MCF 10A (cell line): ENCODE measurements at regions of chr11 and their contacts with region 1.

Region 1: GRCh38 chr11:58675334-58676155 is 53.1 kb downstream of the CNTF start:
- DNase-seq: peak; percentile 63
- H3K4me3 Mint-ChIP-seq: no peak overlapping the region
- H3K27ac Mint-ChIP-seq: no peak overlapping the region
- H3K4me1 Mint-ChIP-seq: no peaks in the 10 kb centered on the region
- H3K27me3 Mint-ChIP-seq: no peaks in the 10 kb centered on the region
- CTCF ChIP-seq: peak; percentile 83

Region 2: GRCh38 chr11:58199271-58199670 is 476.3 kb before region 1 on chr11:
- CTCF ChIA-PET with region 1: no interaction called
- POLR2A ChIA-PET with region 1: no interaction called
- intact Hi-C with region 1: no loop called
- DNase-seq: no peak
- H3K4me3 Mint-ChIP-seq: no peak overlapping the region
- H3K27ac Mint-ChIP-seq: no peak overlapping the region
- H3K4me1 Mint-ChIP-seq: no peaks in the 10 kb centered on the region
- H3K27me3 Mint-ChIP-seq: no peaks in the 10 kb centered on the region
- CTCF ChIP-seq: no peak

Region 3: GRCh38 chr11:58428021-58428420 is 247.5 kb before region 1 on chr11 and contains the start of gene OR5B2:
- CTCF ChIA-PET with region 1: no interaction called
- POLR2A ChIA-PET with region 1: no interaction called
- intact Hi-C with region 1: no loop called
- DNase-seq: no peak
- H3K4me3 Mint-ChIP-seq: no peak within 1 kb of the TSS
- H3K27ac Mint-ChIP-seq: no peak within 1 kb of the TSS
- H3K4me1 Mint-ChIP-seq: no peaks in the 10 kb centered on the region
- H3K27me3 Mint-ChIP-seq: peaks cover 29% of the 10 kb centered on the region
- CTCF ChIP-seq: no peak
- total RNA-seq, gene OR5B2: not detected in 2 replicates

Region 4: GRCh38 chr11:58513747-58514367 is 161.7 kb before region 1 on chr11:
- CTCF ChIA-PET with region 1: no interaction called
- POLR2A ChIA-PET with region 1: no interaction called
- intact Hi-C with region 1: no loop called
- DNase-seq: peak; percentile 76
- H3K4me3 Mint-ChIP-seq: no peak overlapping the region
- H3K27ac Mint-ChIP-seq: no peak overlapping the region
- H3K4me1 Mint-ChIP-seq: peaks cover 5% of the 10 kb centered on the region
- H3K27me3 Mint-ChIP-seq: peaks cover 10% of the 10 kb centered on the region
- CTCF ChIP-seq: peak; percentile 75

Region 5: GRCh38 chr11:58688789-58689503 is 13.4 kb after region 1 on chr11:
- CTCF ChIA-PET with region 1: interaction called, 34 read pairs
- POLR2A ChIA-PET with region 1: interaction called, 4 read pairs
- intact Hi-C with region 1: no loop called
- DNase-seq: peak; percentile 37
- H3K4me3 Mint-ChIP-seq: no peak overlapping the region
- H3K27ac Mint-ChIP-seq: no peak overlapping the region
- H3K4me1 Mint-ChIP-seq: peaks cover 9% of the 10 kb centered on the region
- H3K27me3 Mint-ChIP-seq: no peaks in the 10 kb centered on the region
- CTCF ChIP-seq: no peak

Region 6: GRCh38 chr11:58774164-58774593 is 98.6 kb after region 1 on chr11:
- CTCF ChIA-PET with region 1: no interaction called
- POLR2A ChIA-PET with region 1: no interaction called
- intact Hi-C with region 1: no loop called
- DNase-seq: no peak
- H3K4me3 Mint-ChIP-seq: no peak overlapping the region
- H3K27ac Mint-ChIP-seq: no peak overlapping the region
- H3K4me1 Mint-ChIP-seq: peaks cover 23% of the 10 kb centered on the region
- H3K27me3 Mint-ChIP-seq: no peaks in the 10 kb centered on the region
- CTCF ChIP-seq: no peak

Region 7: GRCh38 chr11:58900479-58901420 is 225.2 kb after region 1 on chr11:
- CTCF ChIA-PET with region 1: interaction called, 3 read pairs
- POLR2A ChIA-PET with region 1: no interaction called
- intact Hi-C with region 1: loop called (anchors 5 kb)
- DNase-seq: peak; percentile 77
- H3K4me3 Mint-ChIP-seq: no peak overlapping the region
- H3K27ac Mint-ChIP-seq: no peak overlapping the region
- H3K4me1 Mint-ChIP-seq: peaks cover 19% of the 10 kb centered on the region
- H3K27me3 Mint-ChIP-seq: no peaks in the 10 kb centered on the region
- CTCF ChIP-seq: peak; percentile 60